GM10248 (cell line): ENCODE measurements at regions of chr12 and their contacts with region 1.

Region 1: GRCh38 chr12:94988471-94988870 is 15.0 kb downstream of the NDUFA12 start:
- DNase-seq: no peak
- CTCF ChIP-seq: no peak

Region 2: DNA sequence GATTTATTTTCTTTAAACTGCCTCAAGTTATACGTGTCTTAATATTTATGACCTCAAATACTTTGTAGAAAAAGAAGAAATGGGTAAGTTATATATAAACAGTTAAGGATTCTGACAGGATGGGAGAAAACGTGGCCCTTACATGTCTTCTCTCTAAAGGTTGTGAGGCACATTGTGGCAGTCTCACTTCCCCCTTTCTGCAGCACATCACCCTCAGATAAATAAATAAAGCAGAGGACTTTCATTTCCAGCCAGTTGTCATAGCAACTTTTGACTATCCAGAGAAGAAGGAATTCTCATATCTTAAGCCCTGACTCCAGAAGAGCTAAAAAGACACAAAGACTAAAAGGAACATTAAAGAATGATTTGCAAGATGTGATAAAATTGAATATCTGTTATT is 500.0 kb before region 1 on chr12:
- CTCF ChIA-PET with region 1: no interaction called
- POLR2A ChIA-PET with region 1: no interaction called
- DNase-seq: peak; percentile 66
- CTCF ChIP-seq: no peak

Region 3: DNA sequence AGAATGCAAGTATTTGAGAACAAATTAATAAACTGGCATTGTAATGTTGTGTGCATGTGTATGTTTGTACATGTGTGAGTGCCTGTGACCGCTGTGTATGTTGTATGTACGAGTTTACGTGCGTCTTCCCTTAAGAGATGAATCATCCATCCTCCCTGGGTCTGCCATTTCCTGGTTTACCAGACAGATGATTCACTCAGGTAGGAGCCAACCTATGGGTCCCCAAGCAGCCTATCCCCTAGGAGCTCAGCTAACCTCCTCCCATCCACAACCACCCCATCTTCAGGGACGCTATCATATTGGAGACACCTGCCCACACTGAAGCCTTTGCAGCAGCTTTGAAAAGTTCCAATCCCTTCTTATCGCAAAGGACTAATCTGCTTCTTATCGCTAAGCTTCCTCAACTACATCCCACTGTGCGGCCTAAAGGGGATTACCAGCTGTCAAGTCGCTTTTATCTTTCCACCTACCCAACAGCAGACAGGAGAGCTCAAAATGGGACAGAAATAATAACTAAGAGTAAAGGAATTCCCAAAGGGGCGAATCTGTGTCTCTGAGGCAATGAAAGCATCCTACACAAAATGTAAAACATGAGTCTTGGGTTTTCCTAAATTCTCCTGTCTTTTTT is 256.6 kb before region 1 on chr12:
- CTCF ChIA-PET with region 1: no interaction called
- POLR2A ChIA-PET with region 1: no interaction called
- DNase-seq: no peak
- CTCF ChIP-seq: no peak

Region 4: DNA sequence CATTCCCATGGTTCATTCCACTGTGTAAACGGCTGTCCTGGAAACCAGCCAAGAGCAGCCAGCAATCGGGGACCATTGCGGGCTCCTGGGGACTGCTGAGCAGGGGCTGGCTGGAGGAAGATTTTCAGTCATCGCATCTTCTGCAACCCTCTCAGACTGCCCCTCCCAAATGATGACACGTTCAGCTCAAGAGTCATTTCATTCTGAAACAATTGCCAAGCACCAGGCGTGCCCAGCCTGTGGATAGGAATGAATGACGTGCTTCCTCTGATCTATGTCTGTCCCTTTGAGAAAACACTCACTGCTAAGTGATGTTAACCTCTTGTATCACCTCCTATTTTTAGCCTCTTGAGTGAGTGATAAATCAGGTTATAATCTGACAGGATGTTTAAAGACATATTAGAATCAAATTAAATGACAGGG is 47.0 kb before region 1 on chr12:
- CTCF ChIA-PET with region 1: no interaction called
- POLR2A ChIA-PET with region 1: no interaction called
- DNase-seq: no peak
- CTCF ChIP-seq: no peak

Region 5: DNA sequence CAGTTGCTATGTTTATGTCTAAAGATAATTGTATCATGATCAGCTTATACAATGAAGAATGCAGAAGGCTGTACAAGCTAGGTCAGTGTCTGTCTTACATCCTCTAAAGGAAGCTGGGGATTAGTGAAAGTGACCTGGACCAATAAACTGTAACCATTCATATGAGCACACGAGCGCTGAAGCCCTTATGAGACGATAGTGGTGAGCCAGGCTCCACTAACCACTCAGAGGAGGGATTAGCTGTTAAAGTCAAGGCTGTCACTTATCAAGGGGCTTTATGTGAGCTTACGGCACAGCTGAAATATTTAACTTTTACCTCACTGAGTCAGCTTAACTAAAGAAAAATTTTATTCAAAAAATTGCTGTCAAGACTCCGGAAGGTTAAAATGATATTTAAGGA is 15.2 kb before region 1 on chr12:
- CTCF ChIA-PET with region 1: interaction called, 13 read pairs
- POLR2A ChIA-PET with region 1: no interaction called
- DNase-seq: no peak
- CTCF ChIP-seq: no peak

Region 6: DNA sequence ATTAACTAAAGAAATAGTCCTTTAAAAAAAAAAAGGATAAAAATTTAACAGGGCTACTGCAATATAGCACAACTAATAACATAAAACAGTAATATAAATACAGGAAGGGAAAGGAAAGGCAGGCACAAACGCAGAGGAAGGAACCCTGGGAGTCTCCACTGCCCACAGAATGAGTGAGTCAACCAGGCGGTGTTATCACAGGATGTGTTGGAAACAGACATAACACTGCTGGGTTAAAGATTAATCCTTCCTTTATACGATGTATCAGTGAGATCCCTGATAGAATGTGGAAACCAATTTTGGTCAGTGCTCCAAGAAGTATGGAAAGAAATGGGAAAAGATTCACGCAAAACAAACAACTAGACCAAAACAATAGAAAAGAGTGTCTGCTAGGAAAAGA is 180.9 kb after region 1 on chr12:
- CTCF ChIA-PET with region 1: no interaction called
- POLR2A ChIA-PET with region 1: no interaction called
- DNase-seq: no peak
- CTCF ChIP-seq: no peak